ENCODE measurements at regions of chr2 and their contacts with region 1.

Region 1: GRCh38 chr2:26785431-26786206 is at the start of gene CENPA:
- DNase-seq: peak; percentile 98 to 99
- H3K4me3 ChIP-seq: peak within 1 kb of the TSS; percentile 75
- H3K4me3 Mint-ChIP-seq: peak within 1 kb of the TSS; percentile 85
- H3K27ac Mint-ChIP-seq: peak within 1 kb of the TSS; percentile 89
- H3K4me1 ChIP-seq: peaks cover 11% of the 10 kb centered on the region
- H3K4me1 Mint-ChIP-seq: peaks cover 18% of the 10 kb centered on the region
- H3K27me3 ChIP-seq: no peaks in the 10 kb centered on the region
- H3K27me3 Mint-ChIP-seq: no peaks in the 10 kb centered on the region
- CTCF ChIP-seq: peak; percentile 15 to 20
- total RNA-seq, gene CENPA: 38.4 and 39.9 TPM in 2 replicates

Region 2: GRCh38 chr2:26561918-26562810 is 223.5 kb before region 1 on chr2:
- CTCF ChIA-PET with region 1: no interaction called
- POLR2A ChIA-PET with region 1: no interaction called
- intact Hi-C with region 1: no loop called
- DNase-seq: peak; percentile 58 to 84
- H3K4me3 ChIP-seq: peak overlapping the region; percentile 41
- H3K4me3 Mint-ChIP-seq: peak overlapping the region; percentile 22
- H3K27ac Mint-ChIP-seq: no peak overlapping the region
- H3K4me1 ChIP-seq: 0 out of 2 replicates have a peak, but pooled peaks cover 4% of the 10 kb centered on the region
- H3K4me1 Mint-ChIP-seq: no peaks in the 10 kb centered on the region
- H3K27me3 ChIP-seq: no peaks in the 10 kb centered on the region
- H3K27me3 Mint-ChIP-seq: peaks cover 26% of the 10 kb centered on the region
- CTCF ChIP-seq: peak; percentile 45 to 57

Region 3: GRCh38 chr2:26757873-26758789 is 27.5 kb before region 1 on chr2:
- CTCF ChIA-PET with region 1: no interaction called
- POLR2A ChIA-PET with region 1: no interaction called
- intact Hi-C with region 1: loop called (anchors 1 kb)
- DNase-seq: peak; percentile 89 to 94
- H3K4me3 ChIP-seq: no peak overlapping the region
- H3K4me3 Mint-ChIP-seq: peak overlapping the region; percentile 63
- H3K27ac Mint-ChIP-seq: peak overlapping the region; percentile 100
- H3K4me1 ChIP-seq: peaks cover 62% of the 10 kb centered on the region
- H3K4me1 Mint-ChIP-seq: peaks cover 17% of the 10 kb centered on the region
- H3K27me3 ChIP-seq: no peaks in the 10 kb centered on the region
- H3K27me3 Mint-ChIP-seq: no peaks in the 10 kb centered on the region
- CTCF ChIP-seq: no peak

Region 4: GRCh38 chr2:26770986-26771602 is 14.5 kb before region 1 on chr2:
- CTCF ChIA-PET with region 1: no interaction called
- POLR2A ChIA-PET with region 1: no interaction called
- intact Hi-C with region 1: loop called (anchors 1 kb)
- DNase-seq: peak; percentile 57 to 60
- H3K4me3 ChIP-seq: no peak overlapping the region
- H3K4me3 Mint-ChIP-seq: no peak overlapping the region
- H3K27ac Mint-ChIP-seq: no peak overlapping the region
- H3K4me1 ChIP-seq: peaks cover 6% of the 10 kb centered on the region
- H3K4me1 Mint-ChIP-seq: peaks cover 17% of the 10 kb centered on the region
- H3K27me3 ChIP-seq: no peaks in the 10 kb centered on the region
- H3K27me3 Mint-ChIP-seq: no peaks in the 10 kb centered on the region
- CTCF ChIP-seq: peak; percentile 58 to 70